ENCODE measurements at regions of chr7 and their contacts with region 1.

Region 1: DNA sequence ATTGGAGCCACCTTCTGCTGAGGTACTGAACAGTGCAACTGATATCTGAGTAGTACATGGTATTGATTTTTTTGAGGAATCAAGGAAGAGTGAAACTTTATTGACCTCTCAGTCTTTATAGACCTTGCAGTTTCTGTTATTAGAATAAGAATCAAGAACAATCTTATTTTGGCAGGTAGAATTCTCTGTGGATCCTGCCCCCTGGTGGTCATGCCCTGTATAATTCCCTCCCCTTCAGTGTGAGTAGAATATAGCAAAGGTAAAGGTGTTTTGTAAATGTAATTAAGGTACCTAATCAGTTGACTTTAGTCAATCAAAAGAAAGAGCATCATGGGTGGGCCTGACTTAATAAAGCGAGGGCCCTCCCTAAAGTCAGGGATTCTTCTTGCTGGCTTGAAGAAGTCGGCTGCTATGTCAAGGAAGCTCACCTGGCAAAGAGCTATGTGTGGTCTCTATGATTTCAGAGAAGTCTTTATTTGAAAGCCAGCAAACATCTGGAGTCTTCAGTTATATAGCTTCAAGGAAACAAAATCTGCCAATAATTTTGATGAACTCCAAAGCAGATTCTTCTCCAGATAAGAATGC is 142.8 kb downstream of the LSM5 start:
- DNase-seq: no peak
- H3K4me3 Mint-ChIP-seq: no peak overlapping the region
- H3K27ac Mint-ChIP-seq: no peak overlapping the region
- H3K4me1 Mint-ChIP-seq: no peaks in the 10 kb centered on the region
- H3K27me3 Mint-ChIP-seq: no peaks in the 10 kb centered on the region

Region 2: DNA sequence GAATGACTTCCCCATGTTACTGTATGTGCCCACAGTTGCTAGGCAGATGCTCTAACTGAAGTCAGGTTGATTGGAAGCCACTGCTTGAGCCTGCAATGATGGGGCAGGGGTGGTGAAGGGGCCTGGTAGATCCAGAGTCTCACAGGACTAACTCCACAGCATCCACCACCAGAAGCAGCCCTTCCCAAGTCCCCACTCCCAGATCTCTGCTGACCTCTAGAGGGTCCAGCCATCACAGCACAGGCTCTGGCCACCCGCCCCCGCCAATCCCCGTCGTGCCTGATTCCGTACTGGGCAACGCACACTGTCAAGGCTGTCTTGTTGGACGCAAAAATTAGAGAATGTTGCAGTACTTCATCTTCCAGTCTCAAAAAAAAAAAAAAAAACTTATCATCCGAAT is 140.3 kb before region 1 on chr7:
- intact Hi-C with region 1: loop called (anchors 2 kb)
- DNase-seq: no peak
- H3K4me3 Mint-ChIP-seq: no peak overlapping the region
- H3K27ac Mint-ChIP-seq: no peak overlapping the region
- H3K4me1 Mint-ChIP-seq: no peaks in the 10 kb centered on the region
- H3K27me3 Mint-ChIP-seq: peaks cover 2% of the 10 kb centered on the region

Region 3: GRCh38 chr7:32259931-32260596 is 87.3 kb before region 1 on chr7:
- intact Hi-C with region 1: no loop called
- DNase-seq: no peak
- H3K4me3 Mint-ChIP-seq: no peak overlapping the region
- H3K27ac Mint-ChIP-seq: no peak overlapping the region
- H3K4me1 Mint-ChIP-seq: no peaks in the 10 kb centered on the region
- H3K27me3 Mint-ChIP-seq: no peaks in the 10 kb centered on the region

Region 4: GRCh38 chr7:32381024-32381601 is 33.8 kb after region 1 on chr7:
- intact Hi-C with region 1: no loop called
- DNase-seq: no peak
- H3K4me3 Mint-ChIP-seq: no peak overlapping the region
- H3K27ac Mint-ChIP-seq: no peak overlapping the region
- H3K4me1 Mint-ChIP-seq: no peaks in the 10 kb centered on the region
- H3K27me3 Mint-ChIP-seq: peaks cover 6% of the 10 kb centered on the region